Caco-2 (cell line): ENCODE measurements at regions of chr10 and their contacts with region 1.

Region 1: DNA sequence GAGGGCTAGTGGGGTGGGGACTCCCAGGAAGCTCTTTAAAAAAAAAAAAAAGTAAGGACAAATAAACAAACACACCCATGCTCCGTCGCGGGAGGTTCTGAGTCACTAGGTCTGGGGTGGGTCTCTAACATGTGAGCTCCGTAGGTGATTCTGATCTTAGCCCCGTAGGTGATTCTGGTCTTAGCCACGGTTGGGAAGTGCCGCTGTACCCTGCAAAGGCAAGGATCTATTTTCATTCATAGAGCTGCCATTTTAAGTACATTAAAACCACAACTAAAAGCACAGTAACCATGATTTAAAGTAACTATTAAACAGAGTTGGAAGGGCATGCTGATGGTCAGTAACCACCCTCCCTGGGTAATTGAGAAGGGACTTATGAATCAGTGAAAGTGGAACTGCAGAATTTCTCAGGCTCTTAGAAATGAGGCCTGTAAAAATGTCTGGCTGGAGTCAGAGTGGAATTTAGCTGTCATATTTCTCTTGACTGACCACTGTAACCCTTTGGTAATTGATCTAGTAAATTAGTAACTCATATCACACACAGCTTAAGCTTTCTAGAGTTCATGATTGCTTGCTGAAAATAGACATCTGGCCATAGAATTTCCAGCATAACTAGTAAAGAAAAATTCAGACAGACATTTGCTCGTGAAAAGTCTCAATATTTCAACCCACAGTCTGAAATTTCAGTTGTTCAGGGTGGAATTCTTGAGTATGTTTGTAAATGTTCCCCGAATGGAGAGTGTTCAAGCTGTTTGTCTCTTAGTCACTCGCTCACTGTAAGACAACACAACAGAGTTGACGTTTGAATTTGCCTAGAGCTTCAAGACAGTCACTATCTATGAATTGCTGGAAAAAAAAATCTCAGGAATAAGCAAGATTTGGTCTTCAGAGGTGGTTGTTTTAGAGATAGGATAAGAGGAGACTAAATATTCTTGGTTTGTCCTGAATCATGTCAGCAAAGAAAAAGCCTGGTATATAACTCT is 34.2 kb upstream of the TCF7L2 start:
- DNase-seq: peak; percentile 47 to 71
- H3K4me3 ChIP-seq: no peak overlapping the region
- H3K4me3 Mint-ChIP-seq: peak overlapping the region; percentile 64
- H3K27ac Mint-ChIP-seq: peak overlapping the region; percentile 87
- H3K4me1 ChIP-seq: peaks cover 10% of the 10 kb centered on the region
- H3K4me1 Mint-ChIP-seq: peaks cover 27% of the 10 kb centered on the region
- H3K27me3 ChIP-seq: no peaks in the 10 kb centered on the region
- H3K27me3 Mint-ChIP-seq: no peaks in the 10 kb centered on the region
- CTCF ChIP-seq: no peak

Region 2: DNA sequence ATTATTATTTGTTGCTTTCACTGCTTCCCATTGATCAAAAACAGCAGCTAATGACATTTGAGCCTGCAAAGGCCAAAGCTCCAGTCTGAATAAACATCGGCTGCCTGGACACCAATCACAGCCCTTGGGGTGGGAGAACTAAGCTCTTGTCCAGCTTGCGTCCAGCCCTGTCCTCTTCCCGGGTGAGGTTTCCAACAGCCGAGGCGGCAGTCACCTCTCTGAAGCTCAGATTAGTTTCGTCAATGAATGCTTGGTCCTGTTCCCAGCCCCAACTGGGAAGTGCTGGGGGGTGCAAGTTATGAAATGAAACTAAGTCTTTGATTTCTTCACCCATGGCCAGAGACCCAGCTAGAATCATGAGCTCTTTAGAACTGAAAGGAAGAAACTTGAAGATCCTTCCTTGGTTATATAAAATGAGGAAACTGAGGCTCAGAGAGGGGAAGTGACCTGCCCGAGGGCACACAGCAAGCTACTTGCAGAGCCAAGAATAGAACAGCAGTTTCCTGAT is 79.9 kb before region 1 on chr10:
- CTCF ChIA-PET with region 1: no interaction called
- POLR2A ChIA-PET with region 1: no interaction called
- intact Hi-C with region 1: no loop called
- DNase-seq: no peak
- H3K4me3 ChIP-seq: no peak overlapping the region
- H3K4me3 Mint-ChIP-seq: no peak overlapping the region
- H3K27ac Mint-ChIP-seq: no peak overlapping the region
- H3K4me1 ChIP-seq: peaks cover 27% of the 10 kb centered on the region
- H3K4me1 Mint-ChIP-seq: peaks cover 7% of the 10 kb centered on the region
- H3K27me3 ChIP-seq: no peaks in the 10 kb centered on the region
- H3K27me3 Mint-ChIP-seq: no peaks in the 10 kb centered on the region
- CTCF ChIP-seq: no peak

Region 3: DNA sequence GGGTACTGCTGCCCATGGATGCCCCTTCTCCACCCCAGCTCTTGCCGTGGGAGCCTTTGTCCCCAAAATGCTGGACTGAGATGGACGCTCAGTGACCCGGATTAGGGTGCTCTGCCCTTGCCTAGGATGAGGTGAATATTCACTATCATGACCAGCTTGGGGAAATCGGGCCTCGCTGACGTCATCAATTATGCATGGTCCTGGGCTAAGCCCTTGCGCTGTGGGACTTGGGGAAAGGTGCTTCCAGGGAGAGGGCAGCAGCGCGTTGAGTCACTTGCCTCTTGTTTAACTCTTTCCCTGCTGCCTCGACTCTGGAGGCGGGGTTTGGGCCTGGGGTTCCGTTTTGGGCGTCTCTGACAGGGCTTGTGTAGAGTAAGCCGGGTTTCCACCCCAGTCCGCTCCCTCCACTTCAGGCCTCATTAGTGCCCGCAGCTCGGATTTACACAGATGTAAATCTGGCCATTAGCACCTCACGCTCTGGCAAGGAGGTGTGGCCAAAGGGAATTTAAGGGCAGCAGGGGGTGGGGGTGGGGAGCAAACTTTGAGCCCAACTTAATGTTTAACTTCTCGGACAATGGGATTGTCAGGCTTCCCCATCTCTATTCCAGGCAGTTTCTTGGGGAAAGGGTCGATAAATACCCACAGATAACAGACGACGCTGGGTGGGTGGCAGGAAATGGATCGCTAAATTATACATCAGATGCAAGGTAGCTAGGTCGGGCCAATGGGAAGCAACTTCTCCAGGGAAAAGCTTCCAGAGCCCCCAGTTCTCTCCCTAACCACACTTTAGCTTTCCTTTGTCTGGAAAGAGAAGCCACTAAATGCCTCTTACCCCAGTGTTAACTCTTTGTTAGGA is 17.1 kb before region 1 on chr10:
- CTCF ChIA-PET with region 1: no interaction called
- POLR2A ChIA-PET with region 1: interaction called, 7 read pairs
- intact Hi-C with region 1: loop called (anchors 2 kb)
- DNase-seq: peak; percentile 83 to 92
- H3K4me3 ChIP-seq: peak overlapping the region; percentile 36
- H3K4me3 Mint-ChIP-seq: peak overlapping the region; percentile 84
- H3K27ac Mint-ChIP-seq: peak overlapping the region; percentile 88
- H3K4me1 ChIP-seq: peaks cover 20% of the 10 kb centered on the region
- H3K4me1 Mint-ChIP-seq: peaks cover 12% of the 10 kb centered on the region
- H3K27me3 ChIP-seq: no peaks in the 10 kb centered on the region
- H3K27me3 Mint-ChIP-seq: no peaks in the 10 kb centered on the region
- CTCF ChIP-seq: no peak